Activated CD4-positive, alpha-beta T cell treated with anti-CD3 and anti-CD28 coated beads, Interleukin-2, amount 10 ng/mL, durations not matched to agents 24 days and 14 days (primary cell): ENCODE measurements at regions of chr4 and their contacts with region 1.

Region 1: DNA sequence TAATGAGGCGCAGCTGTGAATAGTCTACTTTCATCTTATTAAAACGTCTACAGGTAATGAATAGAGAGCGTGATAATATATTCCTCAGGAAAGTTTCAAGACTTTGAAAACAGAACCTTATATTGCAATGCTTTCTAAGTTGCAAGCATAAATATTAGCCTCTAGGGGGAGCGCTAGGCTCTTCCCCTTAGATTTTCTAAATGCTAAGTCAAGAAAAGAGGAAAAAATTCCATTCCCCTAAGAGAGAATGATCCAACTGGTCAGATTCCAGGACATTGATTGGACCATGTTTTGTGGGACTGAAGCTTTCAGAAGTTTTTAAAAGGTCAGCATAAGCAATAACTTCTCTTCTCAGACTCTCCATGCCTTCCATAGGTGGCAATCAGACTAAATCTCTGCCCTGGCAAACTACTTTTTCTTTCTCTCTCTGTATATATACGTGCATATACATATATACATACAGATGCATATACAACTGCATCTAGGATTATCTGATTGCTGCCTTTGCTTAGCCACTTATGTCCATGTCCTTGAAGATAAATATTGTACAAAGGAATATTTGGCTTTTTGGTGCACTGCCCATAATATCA is 492.9 kb downstream of the INPP4B start:
- DNase-seq: peak; percentile 73
- H3K4me3 Mint-ChIP-seq: peak overlapping the region; percentile 69
- H3K27ac Mint-ChIP-seq: peak overlapping the region; percentile 71
- H3K4me1 Mint-ChIP-seq: peaks cover 82% of the 10 kb centered on the region
- H3K27me3 Mint-ChIP-seq: no peaks in the 10 kb centered on the region

Region 2: GRCh38 chr4:142126890-142127497 is 226.2 kb before region 1 on chr4:
- intact Hi-C with region 1: loop called (anchors 5 kb)
- DNase-seq: peak; percentile 88
- H3K4me3 Mint-ChIP-seq: no peak overlapping the region
- H3K27ac Mint-ChIP-seq: no peak overlapping the region
- H3K4me1 Mint-ChIP-seq: peaks cover 12% of the 10 kb centered on the region
- H3K27me3 Mint-ChIP-seq: no peaks in the 10 kb centered on the region

Region 3: DNA sequence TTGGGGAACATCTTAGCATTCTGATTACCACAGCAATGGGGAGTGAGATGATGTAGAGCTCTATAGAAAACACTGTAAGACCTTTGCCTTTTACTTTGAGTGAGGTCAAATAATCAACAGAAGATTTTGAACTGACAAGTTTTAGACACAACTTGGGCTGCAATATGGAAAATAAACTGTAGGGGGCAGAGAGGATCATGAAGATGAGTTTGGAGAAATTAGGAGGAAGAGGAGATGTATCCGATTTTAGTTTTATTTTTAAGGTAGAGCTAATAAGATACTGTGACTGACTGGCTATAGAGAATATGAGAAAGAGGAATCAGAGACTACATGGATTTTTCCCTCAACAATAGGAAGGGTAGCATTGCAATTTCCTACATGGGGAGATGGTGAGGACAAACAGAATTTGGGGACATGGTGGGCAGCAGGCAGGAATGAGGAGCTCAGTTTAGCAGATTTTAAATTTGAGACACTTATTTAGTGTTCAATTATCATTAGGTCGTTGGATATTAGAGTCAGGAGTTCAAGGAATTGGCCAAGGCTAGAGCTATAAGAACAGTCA is 70.3 kb before region 1 on chr4:
- intact Hi-C with region 1: loop called (anchors 2 kb)
- DNase-seq: peak; percentile 84
- H3K4me3 Mint-ChIP-seq: no peak overlapping the region
- H3K27ac Mint-ChIP-seq: no peak overlapping the region
- H3K4me1 Mint-ChIP-seq: peaks cover 10% of the 10 kb centered on the region
- H3K27me3 Mint-ChIP-seq: no peaks in the 10 kb centered on the region

Region 4: DNA sequence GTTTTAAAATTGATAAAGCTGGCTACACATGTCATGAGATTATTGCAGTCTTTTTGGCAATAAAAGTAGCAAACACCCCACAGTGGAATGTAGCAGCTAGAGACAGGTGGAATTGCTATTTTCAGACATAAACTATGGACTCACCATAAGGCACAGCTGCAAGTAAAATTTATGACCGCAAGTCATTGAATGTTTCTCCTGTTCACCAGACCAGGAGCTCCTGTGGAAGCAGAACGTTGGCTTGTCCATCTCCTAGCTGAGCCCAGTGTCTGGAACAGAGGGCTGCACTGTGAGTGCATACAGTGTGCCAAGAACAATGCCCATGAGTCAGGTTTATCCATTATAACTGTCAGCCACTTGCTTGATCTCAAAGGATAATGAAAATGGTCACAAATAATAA is 45.4 kb before region 1 on chr4:
- intact Hi-C with region 1: no loop called
- DNase-seq: peak; percentile 34
- H3K4me3 Mint-ChIP-seq: no peak overlapping the region
- H3K27ac Mint-ChIP-seq: no peak overlapping the region
- H3K4me1 Mint-ChIP-seq: peaks cover 4% of the 10 kb centered on the region
- H3K27me3 Mint-ChIP-seq: no peaks in the 10 kb centered on the region

Region 5: DNA sequence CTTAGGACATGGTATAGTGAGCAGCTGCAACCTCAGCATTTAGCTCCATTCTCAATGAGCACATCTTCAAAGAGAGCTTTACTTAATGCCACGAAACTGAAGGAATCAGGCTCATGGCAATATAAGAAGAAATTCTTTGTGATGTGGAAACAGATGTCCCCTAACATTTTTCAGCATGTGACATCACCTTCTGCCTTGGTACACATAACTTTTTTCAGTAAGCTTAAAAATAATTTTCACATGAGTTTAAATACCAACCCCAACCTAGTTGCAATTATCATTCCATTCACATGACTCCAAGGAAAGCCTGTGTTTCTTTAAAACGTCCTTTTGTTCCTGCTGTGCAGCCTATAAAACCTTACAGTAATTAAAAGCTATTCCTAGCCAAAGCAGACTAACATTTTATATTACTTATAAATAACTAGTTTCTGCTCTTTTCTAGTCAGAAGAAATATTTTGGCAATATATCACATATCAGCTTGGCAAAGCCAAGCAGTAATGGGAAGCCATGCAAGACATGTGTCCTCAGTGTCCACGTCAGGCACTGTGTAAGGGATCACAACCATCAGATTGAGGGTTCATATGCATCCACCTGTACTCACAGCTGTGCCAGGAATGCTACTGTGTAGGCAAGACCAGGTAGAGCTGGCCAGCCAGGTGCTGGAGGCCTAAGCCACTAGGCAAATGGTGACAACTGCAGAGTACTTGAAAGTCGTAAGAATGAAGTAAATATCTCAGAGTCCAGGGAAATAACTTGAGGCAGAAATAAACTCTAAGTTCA is 26.2 kb after region 1 on chr4:
- intact Hi-C with region 1: loop called (anchors 1 kb)
- DNase-seq: no peak
- H3K4me3 Mint-ChIP-seq: no peak overlapping the region
- H3K27ac Mint-ChIP-seq: peak overlapping the region; percentile 77
- H3K4me1 Mint-ChIP-seq: peaks cover 51% of the 10 kb centered on the region
- H3K27me3 Mint-ChIP-seq: no peaks in the 10 kb centered on the region

Region 6: DNA sequence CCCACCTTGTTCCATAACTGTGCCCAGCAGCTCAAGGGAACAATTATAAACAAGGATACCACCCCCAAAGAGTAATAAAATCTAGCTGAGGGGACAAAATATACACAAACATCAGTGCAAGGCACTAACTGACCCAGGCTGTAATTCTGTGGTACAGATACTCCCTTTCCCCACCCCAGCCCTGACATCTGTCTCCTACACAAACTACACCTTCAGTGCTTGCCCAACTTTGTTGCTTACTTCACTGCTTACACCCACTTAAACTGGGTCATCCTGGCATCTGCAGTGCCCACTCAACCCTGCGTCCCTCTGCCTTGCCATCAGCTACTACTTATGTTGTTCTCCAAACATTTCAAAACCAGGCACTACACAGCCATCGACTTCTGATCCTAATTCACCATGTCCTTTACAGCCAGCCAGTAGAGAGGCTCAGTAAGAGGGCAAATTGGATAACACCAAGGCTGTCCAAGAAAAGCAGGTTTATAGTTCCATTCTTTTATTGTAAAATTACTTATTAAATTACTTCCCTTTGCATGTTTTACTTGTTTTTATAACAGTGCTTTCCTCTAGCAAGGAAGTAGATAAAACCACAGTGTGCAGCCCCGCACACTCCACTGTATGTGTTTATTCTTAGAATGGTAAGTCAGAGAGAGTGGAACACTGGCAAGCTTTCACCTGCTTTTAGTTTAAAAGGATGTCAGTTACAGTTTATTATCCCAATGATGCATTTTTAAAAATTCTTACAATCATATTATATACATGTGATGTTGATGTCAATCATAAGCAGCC is 343.3 kb after region 1 on chr4:
- intact Hi-C with region 1: loop called (anchors 5 kb)
- DNase-seq: peak; percentile 71
- H3K4me3 Mint-ChIP-seq: peak overlapping the region; percentile 26
- H3K27ac Mint-ChIP-seq: peak overlapping the region; percentile 79
- H3K4me1 Mint-ChIP-seq: peaks cover 48% of the 10 kb centered on the region
- H3K27me3 Mint-ChIP-seq: no peaks in the 10 kb centered on the region

Region 7: DNA sequence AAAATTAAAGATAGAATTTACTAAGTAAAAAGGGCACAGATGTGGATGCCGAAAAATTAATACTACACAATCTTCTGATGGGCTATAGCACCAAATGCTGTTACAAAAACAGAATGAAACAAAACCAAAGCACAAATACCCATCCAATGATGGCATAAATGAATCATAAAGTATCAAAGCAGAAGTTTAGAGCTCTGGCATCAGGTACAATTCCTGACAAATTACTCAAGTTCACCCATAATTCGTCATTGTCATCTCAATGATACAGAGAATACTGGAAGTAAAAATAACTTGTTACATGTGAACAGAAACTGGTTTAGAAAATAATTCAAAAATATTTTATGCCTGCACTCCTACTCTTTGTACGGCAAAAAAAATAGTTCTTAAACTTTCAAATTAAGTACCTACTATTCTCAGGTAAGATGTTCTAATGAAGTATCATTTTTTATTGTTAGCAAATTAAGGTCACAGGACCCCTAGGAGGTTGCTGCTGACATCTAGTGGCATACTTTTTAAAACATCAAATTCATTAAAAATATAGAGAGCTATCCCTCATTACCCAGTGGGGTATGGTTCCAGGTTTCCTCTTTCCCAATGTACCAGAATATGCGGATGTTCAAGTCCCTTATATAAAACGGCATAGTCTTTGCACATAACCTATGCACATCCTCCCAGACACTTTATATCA is 366.8 kb after region 1 on chr4:
- intact Hi-C with region 1: loop called (anchors 1 kb)
- DNase-seq: peak; percentile 67
- H3K4me3 Mint-ChIP-seq: no peak overlapping the region
- H3K27ac Mint-ChIP-seq: no peak overlapping the region
- H3K4me1 Mint-ChIP-seq: peaks cover 11% of the 10 kb centered on the region
- H3K27me3 Mint-ChIP-seq: no peaks in the 10 kb centered on the region